ENCODE measurements at regions of chr4 and their contacts with region 1.

Region 1: DNA sequence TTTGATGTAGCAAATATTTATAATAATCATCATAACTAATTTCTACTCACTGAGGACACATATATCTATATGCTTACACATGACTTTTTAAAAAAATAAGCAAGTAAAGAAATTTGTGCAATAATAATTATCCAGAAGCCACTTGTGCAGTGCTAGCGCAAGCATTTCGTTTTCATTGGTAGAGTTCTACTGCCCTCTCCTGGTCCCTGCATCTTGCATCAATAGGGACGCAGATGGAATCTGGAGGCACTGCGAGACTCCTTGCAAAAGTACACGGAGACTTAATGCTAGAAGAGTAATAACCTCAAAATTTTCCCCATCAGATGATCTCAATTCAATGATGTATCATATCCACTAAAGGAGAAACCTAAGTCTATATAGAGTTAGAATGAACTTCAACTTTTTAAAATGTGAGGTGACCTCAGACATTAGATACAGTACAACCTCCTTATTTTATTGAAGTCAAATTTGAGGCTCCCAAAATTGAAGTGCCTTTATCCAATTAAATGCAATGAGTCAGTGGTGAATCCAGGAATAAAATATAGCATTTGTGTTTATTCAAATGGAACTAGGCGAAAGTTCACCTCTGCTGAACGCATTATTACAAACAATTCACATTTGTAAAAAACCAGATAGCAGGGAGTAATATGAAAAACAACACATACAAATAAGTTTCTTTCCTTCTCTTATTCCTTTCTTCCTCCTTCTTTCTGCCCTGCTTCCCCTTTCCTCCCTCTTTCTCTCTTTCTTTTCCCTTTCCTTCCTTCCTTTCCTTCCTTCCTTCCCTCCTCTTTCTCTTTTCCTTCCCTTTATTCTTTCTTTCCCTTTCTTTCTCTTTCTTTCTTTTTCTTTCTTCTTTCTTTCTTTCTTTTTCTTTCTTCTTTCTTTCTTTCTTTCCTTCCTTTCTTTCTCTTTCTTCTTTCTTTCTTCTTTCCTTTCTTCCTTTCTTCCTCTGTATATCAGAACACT is 450.0 kb downstream of the ANKRD50 start:
- DNase-seq: peak; percentile 57 to 71
- H3K4me3 ChIP-seq: no peak overlapping the region
- H3K27ac ChIP-seq: no peak overlapping the region
- H3K4me1 ChIP-seq: no peaks in the 10 kb centered on the region
- H3K27me3 ChIP-seq: no peaks in the 10 kb centered on the region
- CTCF ChIP-seq: peak; percentile 95

Region 2: GRCh38 chr4:122602277-122603142 is 1660.0 kb before region 1 on chr4:
- CTCF ChIA-PET with region 1: no interaction called
- POLR2A ChIA-PET with region 1: no interaction called
- intact Hi-C with region 1: loop called (anchors 5 kb)
- DNase-seq: peak in 1 of 2 experiments; percentile 6
- H3K4me3 ChIP-seq: no peak overlapping the region
- H3K27ac ChIP-seq: no peak overlapping the region
- H3K4me1 ChIP-seq: no peaks in the 10 kb centered on the region
- H3K27me3 ChIP-seq: 0 out of 2 replicates have a peak, but pooled peaks cover 6% of the 10 kb centered on the region
- CTCF ChIP-seq: peak; percentile 64

Region 3: GRCh38 chr4:123102897-123103471 is 1159.5 kb before region 1 on chr4:
- CTCF ChIA-PET with region 1: no interaction called
- POLR2A ChIA-PET with region 1: no interaction called
- intact Hi-C with region 1: loop called (anchors 2 kb)
- DNase-seq: peak in 1 of 2 experiments; percentile 38
- H3K4me3 ChIP-seq: no peak overlapping the region
- H3K27ac ChIP-seq: no peak overlapping the region
- H3K4me1 ChIP-seq: no peaks in the 10 kb centered on the region
- H3K27me3 ChIP-seq: no peaks in the 10 kb centered on the region
- CTCF ChIP-seq: peak; percentile 92

Region 4: GRCh38 chr4:123127218-123127617 is 1135.3 kb before region 1 on chr4:
- CTCF ChIA-PET with region 1: no interaction called
- POLR2A ChIA-PET with region 1: no interaction called
- intact Hi-C with region 1: loop called (anchors 1 kb)
- DNase-seq: peak in 1 of 2 experiments; percentile 30
- H3K4me3 ChIP-seq: no peak overlapping the region
- H3K27ac ChIP-seq: no peak overlapping the region
- H3K4me1 ChIP-seq: peaks cover 4% of the 10 kb centered on the region; the same call in 1 of the 2 replicates
- H3K27me3 ChIP-seq: no peaks in the 10 kb centered on the region
- CTCF ChIP-seq: peak; percentile 62

Region 5: GRCh38 chr4:123390846-123391456 is 871.5 kb before region 1 on chr4:
- CTCF ChIA-PET with region 1: no interaction called
- POLR2A ChIA-PET with region 1: no interaction called
- intact Hi-C with region 1: loop called (anchors 5 kb)
- DNase-seq: no peak
- H3K4me3 ChIP-seq: no peak overlapping the region
- H3K27ac ChIP-seq: no peak overlapping the region
- H3K4me1 ChIP-seq: peaks cover 4% of the 10 kb centered on the region
- H3K27me3 ChIP-seq: no peaks in the 10 kb centered on the region
- CTCF ChIP-seq: peak; percentile 76

Region 6: DNA sequence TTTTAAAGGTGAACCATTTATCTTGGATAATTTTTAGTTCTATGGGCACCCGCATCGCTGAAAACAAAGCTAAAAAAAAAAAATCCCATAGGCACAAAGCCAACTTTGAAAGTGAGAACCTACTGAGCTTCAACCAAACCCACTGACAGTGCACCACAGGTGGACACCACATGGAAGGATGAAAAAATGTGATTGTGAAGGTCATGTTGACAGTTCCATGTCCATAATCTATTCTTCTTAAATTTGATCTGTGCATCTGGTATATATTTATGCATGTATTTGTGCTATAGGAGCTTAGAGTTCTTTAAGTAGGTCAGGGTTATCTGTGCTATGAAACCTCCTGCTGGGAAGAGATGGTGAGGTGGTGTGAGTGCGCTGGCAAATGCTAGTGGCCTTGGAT is 491.6 kb before region 1 on chr4:
- CTCF ChIA-PET with region 1: no interaction called
- POLR2A ChIA-PET with region 1: no interaction called
- intact Hi-C with region 1: loop called (anchors 5 kb)
- DNase-seq: no peak
- H3K4me3 ChIP-seq: no peak overlapping the region
- H3K27ac ChIP-seq: no peak overlapping the region
- H3K4me1 ChIP-seq: no peaks in the 10 kb centered on the region
- H3K27me3 ChIP-seq: no peaks in the 10 kb centered on the region
- CTCF ChIP-seq: no peak

Region 7: GRCh38 chr4:124276451-124276850 is 14.0 kb after region 1 on chr4:
- CTCF ChIA-PET with region 1: no interaction called
- POLR2A ChIA-PET with region 1: no interaction called
- intact Hi-C with region 1: no loop called
- DNase-seq: no peak
- H3K4me3 ChIP-seq: no peak overlapping the region
- H3K27ac ChIP-seq: no peak overlapping the region
- H3K4me1 ChIP-seq: peaks cover 5% of the 10 kb centered on the region; the same call in 1 of the 2 replicates
- H3K27me3 ChIP-seq: no peaks in the 10 kb centered on the region
- CTCF ChIP-seq: no peak

Region 8: DNA sequence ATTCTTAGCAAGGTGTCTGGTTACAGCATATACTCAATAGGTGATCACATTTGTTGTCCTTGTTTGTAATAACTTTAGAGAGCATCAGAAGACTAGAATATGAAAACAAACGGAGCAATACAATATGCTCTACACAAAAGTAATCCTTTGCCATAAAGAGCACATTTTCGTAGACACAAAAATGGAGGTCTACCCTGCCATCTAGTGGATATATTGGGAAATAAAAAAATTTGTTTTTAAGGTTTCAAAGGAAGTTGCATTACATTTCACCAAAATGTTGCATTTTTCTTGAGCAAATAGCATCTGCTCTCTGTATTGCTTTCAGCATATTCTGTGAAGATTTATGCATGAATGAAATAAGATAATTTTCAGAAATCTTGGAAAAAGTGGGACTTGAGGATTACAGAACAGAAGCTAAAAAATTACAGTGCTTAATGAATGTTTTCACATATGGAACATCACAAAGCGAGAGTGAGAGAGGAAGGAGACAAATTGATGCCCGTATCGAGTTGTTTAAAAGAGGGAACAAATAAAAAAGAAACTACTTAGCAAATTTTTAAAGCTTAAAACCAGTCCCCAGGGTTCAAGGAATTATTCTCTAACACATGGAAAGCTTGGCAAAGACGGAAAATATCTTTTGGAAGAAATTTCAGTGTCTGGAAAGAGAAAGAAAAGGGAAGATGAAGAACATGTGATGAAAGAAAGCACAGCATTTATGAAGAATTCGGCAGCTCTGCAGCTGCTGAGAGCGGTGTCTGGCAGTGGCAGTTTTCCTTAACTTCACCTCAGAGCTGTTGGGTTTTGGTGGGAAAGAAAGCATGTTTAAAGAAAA is 60.0 kb after region 1 on chr4:
- CTCF ChIA-PET with region 1: no interaction called
- POLR2A ChIA-PET with region 1: no interaction called
- intact Hi-C with region 1: loop called (anchors 2 kb)
- DNase-seq: no peak
- H3K4me3 ChIP-seq: no peak overlapping the region
- H3K27ac ChIP-seq: no peak overlapping the region
- H3K4me1 ChIP-seq: no peaks in the 10 kb centered on the region
- H3K27me3 ChIP-seq: no peaks in the 10 kb centered on the region
- CTCF ChIP-seq: peak; percentile 82